Mammary epithelial cell (primary cell): ENCODE measurements at regions of chr13 and their contacts with region 1.

Region 1: DNA sequence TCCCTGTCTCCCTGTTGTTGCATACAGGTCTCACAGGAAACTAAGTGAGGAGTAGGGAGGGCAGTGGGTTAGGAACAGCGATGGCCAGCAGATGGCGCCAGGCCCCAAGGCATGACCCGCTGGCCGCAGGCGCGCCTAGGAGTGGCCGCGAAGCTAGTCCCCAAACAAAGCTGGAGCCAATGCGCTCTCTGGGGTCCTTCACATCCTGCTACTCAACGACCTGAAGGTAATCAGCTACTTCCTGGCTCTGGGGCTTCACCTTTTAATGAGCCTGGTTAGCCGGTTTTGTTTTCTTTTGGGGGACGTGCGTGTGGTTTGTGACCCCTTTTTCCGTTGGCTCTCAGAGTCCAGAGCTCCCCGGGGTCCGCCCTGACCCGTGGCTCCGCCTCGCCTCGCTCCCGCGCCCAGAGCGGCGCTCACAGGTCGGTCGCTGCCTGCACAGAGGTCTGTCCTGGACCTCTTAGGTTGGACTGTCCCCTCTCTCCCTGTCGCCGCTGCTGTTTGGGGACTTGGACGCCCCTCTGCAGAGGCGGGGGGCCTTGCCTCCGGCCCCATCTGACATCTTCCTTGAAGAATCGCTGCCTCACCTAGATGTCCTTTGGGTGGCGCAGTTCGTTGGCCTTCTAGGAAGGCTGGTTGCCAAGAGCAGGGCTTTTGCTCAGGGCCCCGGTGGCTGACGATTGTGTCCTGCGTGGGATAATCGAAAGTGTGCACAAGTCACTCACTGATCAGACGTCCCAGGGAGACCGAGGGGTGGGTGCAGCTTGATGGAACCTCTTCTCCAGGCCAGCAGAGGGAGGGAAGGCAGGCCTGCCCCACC is 62.1 kb upstream of the GTF3A start:
- DNase-seq: peak; percentile 68
- H3K4me3 ChIP-seq: peak overlapping the region; percentile 26 to 42 (median 42)
- H3K27ac ChIP-seq: no peak overlapping the region
- H3K4me1 ChIP-seq: peaks cover 5% of the 10 kb centered on the region
- H3K27me3 ChIP-seq: no peaks in the 10 kb centered on the region
- CTCF ChIP-seq: peak; percentile 91 to 95

Region 2: DNA sequence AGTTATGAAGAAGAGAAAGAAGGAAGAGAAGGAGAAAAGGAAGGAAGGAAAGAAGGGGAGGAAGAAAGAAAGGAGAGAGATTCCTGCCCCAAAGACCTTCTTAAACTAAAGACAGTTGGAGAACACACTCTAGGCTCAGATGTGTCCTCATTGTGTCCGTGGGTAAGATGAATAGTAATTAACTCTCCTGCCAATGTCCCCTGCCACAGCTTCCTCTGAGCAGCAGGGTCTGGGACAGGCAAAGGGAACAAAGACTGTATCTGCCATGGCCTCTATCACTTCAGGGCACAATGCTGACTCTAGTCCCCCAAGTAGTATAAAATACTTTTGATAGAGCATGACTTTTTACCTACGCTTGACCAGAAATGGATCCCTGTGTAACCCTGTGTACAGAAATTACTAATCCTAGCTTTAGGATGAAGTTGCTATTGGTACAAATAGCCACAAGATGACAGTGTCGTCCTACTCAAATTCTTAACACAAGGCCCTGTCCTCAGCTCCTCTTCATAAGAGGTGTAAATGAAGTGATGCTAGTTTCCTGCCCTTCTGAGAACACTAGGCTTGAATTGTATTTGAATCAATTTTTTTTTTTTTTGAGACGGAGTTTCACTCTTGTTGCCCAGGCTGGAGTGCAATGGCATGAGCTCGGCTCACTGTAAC is 415.5 kb before region 1 on chr13:
- CTCF ChIA-PET with region 1: interaction called, 3 read pairs
- dilution Hi-C with region 1: no loop called
- in situ Hi-C with region 1: no loop called
- intact Hi-C with region 1: loop called (anchors 1 kb)
- DNase-seq: peak; percentile 29
- H3K4me3 ChIP-seq: no peak overlapping the region
- H3K27ac ChIP-seq: no peak overlapping the region
- H3K4me1 ChIP-seq: no peaks in the 10 kb centered on the region
- H3K27me3 ChIP-seq: no peaks in the 10 kb centered on the region
- CTCF ChIP-seq: peak; percentile 78 to 86

Region 3: DNA sequence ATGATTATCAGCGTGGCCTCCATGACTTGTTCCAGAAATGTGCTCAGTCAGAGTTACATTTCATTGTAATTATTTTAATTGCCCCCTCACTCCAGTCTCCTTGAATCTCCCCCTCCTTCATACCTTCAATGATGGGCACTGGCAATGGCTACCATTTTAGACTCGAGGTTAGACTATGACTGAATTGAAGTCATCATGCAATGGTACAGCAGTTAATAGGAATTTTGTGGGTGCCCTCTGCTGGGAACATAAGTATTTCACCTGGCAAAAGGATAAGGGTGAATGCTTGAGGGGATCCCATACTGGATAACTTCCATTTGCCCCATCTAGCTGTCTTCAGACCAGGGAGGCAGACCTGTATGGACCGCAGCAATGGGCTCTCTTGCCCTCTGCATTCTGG is 158.4 kb before region 1 on chr13:
- CTCF ChIA-PET with region 1: no interaction called
- dilution Hi-C with region 1: no loop called
- in situ Hi-C with region 1: no loop called
- intact Hi-C with region 1: loop called (anchors 5 kb)
- DNase-seq: peak; percentile 15
- H3K4me3 ChIP-seq: no peak overlapping the region
- H3K27ac ChIP-seq: no peak overlapping the region
- H3K4me1 ChIP-seq: no peaks in the 10 kb centered on the region
- H3K27me3 ChIP-seq: no peaks in the 10 kb centered on the region
- CTCF ChIP-seq: peak; percentile 19 to 52

Region 4: DNA sequence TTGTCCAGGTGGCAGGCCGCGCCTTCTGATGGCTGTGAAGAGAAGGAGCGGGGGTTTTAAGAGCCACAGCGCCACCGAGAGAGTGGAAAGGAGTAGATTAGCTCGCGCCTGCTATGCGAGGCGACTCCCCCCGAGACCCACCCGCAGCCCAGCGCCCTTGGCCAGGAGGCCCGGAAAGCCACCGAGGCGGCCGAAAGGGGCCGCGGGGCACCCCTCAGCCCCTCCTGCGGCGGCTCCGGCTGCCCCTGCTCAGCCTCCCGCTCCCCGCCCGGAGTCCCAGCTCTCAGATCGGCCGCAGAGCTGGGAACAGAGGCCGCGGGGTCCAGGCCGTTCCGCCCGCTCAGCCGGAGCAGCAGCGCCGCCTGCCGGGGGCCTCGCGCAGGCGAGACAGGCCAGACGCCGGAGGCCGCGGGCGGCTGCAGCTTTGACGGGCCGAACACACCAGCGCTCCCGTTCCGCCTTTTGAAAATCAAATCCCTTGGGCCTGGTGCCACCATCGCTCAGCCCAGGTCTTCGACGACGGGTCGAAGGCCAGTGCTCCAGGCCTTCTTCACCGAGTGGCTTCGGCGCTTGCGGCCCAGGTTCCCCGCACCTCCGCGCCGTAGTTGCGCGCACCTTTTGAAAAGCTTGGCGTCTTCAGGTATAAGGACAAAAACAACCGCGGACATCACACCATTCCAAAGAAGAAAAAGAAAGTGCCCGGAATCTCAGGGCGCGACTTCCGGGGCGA is 591.6 kb after region 1 on chr13:
- CTCF ChIA-PET with region 1: no interaction called
- dilution Hi-C with region 1: no loop called
- in situ Hi-C with region 1: no loop called
- intact Hi-C with region 1: loop called (anchors 10 kb)
- DNase-seq: peak; percentile 69
- H3K4me3 ChIP-seq: peak overlapping the region; percentile 51 to 61 (median 56)
- H3K27ac ChIP-seq: no peak overlapping the region
- H3K4me1 ChIP-seq: peaks cover 12% of the 10 kb centered on the region
- H3K27me3 ChIP-seq: peaks cover 7% of the 10 kb centered on the region
- CTCF ChIP-seq: peak; percentile 64 to 82